K562 (cell line): ENCODE measurements at regions of chr2 and their contacts with region 1.

Region 1: DNA sequence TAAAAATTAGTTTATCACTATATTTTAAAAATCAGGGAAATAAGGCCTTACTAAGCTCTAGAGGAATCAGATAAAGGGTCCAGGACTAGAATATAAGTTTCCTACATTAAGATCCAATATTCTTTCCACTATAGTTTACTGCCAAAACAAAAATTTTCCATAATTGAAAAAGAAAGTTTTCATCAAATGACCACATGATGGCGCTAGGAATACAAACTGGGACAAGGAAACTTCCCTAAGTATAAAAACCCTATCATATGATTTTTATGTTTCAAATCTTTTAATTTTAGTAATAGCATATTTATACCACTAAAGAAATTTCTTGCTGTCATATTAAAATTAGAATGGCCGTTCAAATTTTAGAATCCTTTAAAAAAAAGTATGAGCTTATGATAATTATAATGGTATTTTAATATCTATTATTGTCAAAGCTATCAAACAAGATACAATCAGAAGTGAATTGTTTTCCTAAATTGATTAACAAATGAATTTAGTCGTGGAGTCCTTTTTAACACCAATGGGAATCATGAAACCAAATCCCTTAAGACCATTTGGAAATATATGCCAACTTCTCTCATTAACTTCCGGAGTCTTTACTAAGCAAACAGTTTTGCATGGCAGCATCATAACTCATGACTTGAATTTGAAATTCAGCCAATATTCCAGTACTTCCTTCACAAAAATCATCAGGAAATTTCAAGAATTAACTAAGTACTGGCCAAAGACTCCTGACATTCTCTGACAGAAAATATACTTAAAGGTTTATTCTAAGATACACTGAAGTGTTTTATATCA is 70.3 kb downstream of the SCN1A start:
- DNase-seq: peak; percentile 12 to 42 (median 16)
- ATAC-seq: no peak
- H3K4me3 ChIP-seq: no peak overlapping the region
- H3K27ac ChIP-seq: no peak overlapping the region
- H3K4me1 ChIP-seq: no peaks in the 10 kb centered on the region
- H3K27me3 ChIP-seq: no peaks in the 10 kb centered on the region
- CTCF ChIP-seq: peak in 2 of 3 experiments; percentile 39 to 71; a peak in 3 of 6 replicates
- EP300 ChIP-seq: no peak
- POLR2A ChIP-seq: no peak
- RAD21 ChIP-seq: peak; percentile 56 to 67

Region 2: GRCh38 chr2:166074430-166074829 is 16.9 kb after region 1 on chr2:
- CTCF ChIA-PET with region 1: no interaction called
- POLR2A ChIA-PET with region 1: no interaction called
- in situ Hi-C with region 1: no loop called
- intact Hi-C with region 1: no loop called
- DNase-seq: no peak
- ATAC-seq: no peak
- H3K4me3 ChIP-seq: no peak overlapping the region
- H3K27ac ChIP-seq: no peak overlapping the region
- H3K4me1 ChIP-seq: no peaks in the 10 kb centered on the region
- H3K27me3 ChIP-seq: no peaks in the 10 kb centered on the region
- CTCF ChIP-seq: no peak
- EP300 ChIP-seq: no peak
- POLR2A ChIP-seq: no peak
- RAD21 ChIP-seq: no peak

Region 3: GRCh38 chr2:166106431-166107015 is 49.0 kb after region 1 on chr2:
- CTCF ChIA-PET with region 1: interaction called, 19 read pairs
- POLR2A ChIA-PET with region 1: no interaction called
- in situ Hi-C with region 1: no loop called
- intact Hi-C with region 1: loop called (anchors 1 kb)
- DNase-seq: peak in 2 of 4 experiments; percentile 31 to 67
- ATAC-seq: peak; percentile 94
- H3K4me3 ChIP-seq: no peak overlapping the region
- H3K27ac ChIP-seq: no peak overlapping the region
- H3K4me1 ChIP-seq: no peaks in the 10 kb centered on the region
- H3K27me3 ChIP-seq: no peaks in the 10 kb centered on the region
- CTCF ChIP-seq: peak; percentile 62 to 68 (median 64)
- EP300 ChIP-seq: no peak
- POLR2A ChIP-seq: no peak
- RAD21 ChIP-seq: peak; percentile 31 to 65

Region 4: GRCh38 chr2:166127217-166128155 is 69.9 kb after region 1 on chr2 and contains the start of gene SCN1A:
- CTCF ChIA-PET with region 1: interaction called, 6 read pairs
- POLR2A ChIA-PET with region 1: interaction called, 3 read pairs
- in situ Hi-C with region 1: no loop called
- intact Hi-C with region 1: loop called (anchors 1 kb)
- DNase-seq: peak; percentile 18 to 41 (median 30)
- ATAC-seq: peak; percentile 58; the same call in 2 of the 3 replicates
- H3K4me3 ChIP-seq: no peak within 1 kb of the TSS
- H3K27ac ChIP-seq: no peak within 1 kb of the TSS
- H3K4me1 ChIP-seq: no peaks in the 10 kb centered on the region
- H3K27me3 ChIP-seq: no peaks in the 10 kb centered on the region
- CTCF ChIP-seq: peak; percentile 38 to 82 (median 64); a peak in 5 of 6 replicates
- EP300 ChIP-seq: no peak
- POLR2A ChIP-seq: no peak
- RAD21 ChIP-seq: peak; percentile 54 to 55
- polyA plus RNA-seq, gene SCN1A: not detected

Region 5: DNA sequence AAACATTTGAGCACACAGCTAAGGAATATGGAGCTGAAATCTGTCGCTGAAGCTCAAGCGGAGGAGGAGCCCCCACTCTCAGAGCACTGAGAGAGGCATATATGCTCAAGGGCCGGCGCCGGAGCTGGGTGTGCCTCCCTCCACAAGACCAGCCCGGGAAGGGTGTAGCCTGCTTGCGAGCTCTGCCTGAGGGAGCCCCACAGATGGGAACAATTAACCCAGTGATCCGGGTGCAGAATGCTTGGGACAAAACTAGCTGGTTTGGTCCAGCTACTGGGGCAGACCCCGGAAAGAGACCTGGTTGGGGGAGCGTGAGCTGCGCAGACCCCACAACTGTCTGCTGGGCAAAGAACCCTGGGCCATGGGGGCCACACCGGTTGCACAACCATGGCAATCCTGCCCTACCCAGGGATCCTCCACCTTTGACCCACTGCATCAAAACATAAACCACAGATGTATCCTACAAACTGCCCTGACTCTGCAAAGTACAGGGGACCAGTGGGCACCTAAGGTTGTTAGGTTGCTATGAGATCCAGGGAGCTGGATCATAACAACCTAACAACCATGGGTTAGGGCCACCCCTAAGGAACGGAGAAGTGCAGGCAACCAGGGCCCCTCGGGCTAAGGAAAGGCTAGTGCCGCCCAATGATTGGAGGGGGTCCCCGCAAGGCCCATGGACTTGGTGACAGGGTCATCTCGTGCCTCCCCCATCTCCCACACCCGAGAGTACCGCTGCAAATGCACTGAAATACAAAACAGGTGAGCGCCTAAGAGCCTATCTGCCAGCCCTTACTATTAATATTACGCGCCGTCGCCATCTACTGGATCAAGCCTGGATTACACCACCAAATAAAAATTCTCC is 123.6 kb after region 1 on chr2:
- CTCF ChIA-PET with region 1: no interaction called
- POLR2A ChIA-PET with region 1: no interaction called
- in situ Hi-C with region 1: no loop called
- intact Hi-C with region 1: loop called (anchors 2 kb)
- DNase-seq: peak; percentile 39 to 66 (median 45)
- ATAC-seq: peak; percentile 89
- H3K4me3 ChIP-seq: no peak overlapping the region
- H3K27ac ChIP-seq: no peak overlapping the region
- H3K4me1 ChIP-seq: no peaks in the 10 kb centered on the region
- H3K27me3 ChIP-seq: peaks cover 0 to 7% of the 10 kb centered on the region in 2 experiments; a peak in 1 of 5 replicates
- CTCF ChIP-seq: peak; percentile 61 to 69 (median 65)
- EP300 ChIP-seq: no peak
- POLR2A ChIP-seq: no peak
- RAD21 ChIP-seq: peak; percentile 36 to 58